ENCODE measurements at regions of chr2 and their contacts with region 1.

Region 1: DNA sequence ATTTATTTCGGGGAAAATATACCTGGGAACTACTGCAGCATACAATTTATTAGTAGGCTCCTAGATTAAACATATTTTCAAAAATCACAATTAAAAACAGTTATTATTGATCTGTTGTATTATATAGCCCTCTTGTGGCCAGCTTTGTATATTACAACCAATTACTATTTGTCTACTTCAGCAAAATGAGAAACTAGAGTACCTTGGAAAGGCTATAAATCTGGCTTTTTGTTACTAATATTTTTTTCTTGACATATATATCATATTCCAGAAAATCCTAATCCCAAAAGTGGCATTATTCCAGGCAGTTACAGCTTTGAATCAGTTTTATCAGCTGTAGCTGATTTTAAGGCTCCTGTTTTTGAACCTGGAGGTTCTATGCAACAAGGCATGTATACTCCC is 101.2 kb downstream of the UBR3 start:
- DNase-seq: no peak
- H3K4me3 ChIP-seq: no peak overlapping the region
- H3K27ac ChIP-seq: no peak overlapping the region
- H3K4me1 ChIP-seq: no peaks in the 10 kb centered on the region
- H3K27me3 ChIP-seq: no peaks in the 10 kb centered on the region
- CTCF ChIP-seq: peak; percentile 57

Region 2: GRCh38 chr2:169746240-169746639 is 182.2 kb before region 1 on chr2:
- intact Hi-C with region 1: no loop called
- DNase-seq: no peak
- H3K4me3 ChIP-seq: no peak overlapping the region
- H3K27ac ChIP-seq: no peak overlapping the region
- H3K4me1 ChIP-seq: no peaks in the 10 kb centered on the region
- H3K27me3 ChIP-seq: no peaks in the 10 kb centered on the region
- CTCF ChIP-seq: no peak

Region 3: DNA sequence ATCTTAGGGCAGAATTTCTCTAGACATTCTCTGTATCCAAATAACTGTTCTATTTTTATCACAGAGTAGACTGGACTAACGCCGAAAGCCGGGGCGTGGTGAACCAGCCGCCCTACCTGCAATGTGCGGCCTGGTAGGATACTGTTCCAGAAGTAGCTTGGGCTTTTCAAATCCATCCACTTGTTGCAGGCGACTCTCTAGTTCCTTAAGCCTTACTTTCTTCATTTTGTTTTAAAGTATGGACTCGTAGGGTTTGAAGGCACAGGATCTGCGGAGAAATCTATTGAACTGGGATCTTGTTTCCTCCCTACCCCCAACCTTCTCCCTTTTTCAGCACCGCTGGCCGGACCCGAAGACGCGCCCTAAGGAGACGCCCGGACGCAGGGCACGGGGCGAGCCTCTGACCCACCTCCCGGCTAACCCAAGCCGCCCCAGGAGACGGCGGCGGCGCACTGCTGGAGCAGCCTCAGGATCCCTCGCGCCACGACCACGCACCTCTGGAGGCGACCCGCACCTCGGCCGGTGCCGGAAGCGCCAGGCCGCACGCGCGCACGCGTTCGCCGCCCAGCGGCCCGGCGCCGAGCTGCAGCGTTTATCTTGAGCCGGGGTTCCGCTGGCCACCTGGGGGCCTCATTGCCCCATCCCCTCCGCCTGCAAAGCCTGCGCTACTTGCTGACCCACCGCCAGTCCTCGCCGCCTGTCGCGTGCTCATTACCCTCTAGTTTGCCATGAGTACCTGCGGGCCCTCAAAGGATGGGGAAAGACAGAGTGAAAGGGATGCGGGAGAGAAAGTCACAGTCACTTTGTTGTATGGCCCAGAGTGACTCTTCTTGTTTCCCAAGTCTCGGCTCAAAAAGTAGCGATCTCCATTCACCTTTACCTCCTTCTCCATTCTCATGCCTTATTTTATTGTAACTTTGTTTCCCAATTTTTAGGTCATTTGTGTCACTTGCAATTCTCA is 103.8 kb before region 1 on chr2 and contains the start of gene METTL5:
- intact Hi-C with region 1: loop called (anchors 5 kb)
- DNase-seq: peak; percentile 87
- H3K4me3 ChIP-seq: peak within 1 kb of the TSS; percentile 57
- H3K27ac ChIP-seq: peak within 1 kb of the TSS; percentile 58
- H3K4me1 ChIP-seq: peaks cover 13% of the 10 kb centered on the region
- H3K27me3 ChIP-seq: no peaks in the 10 kb centered on the region
- CTCF ChIP-seq: peak; percentile 97
- total RNA-seq, gene METTL5: 39.8 to 40.9 TPM

Measured in colonic mucosa (tissue), 4 donors.